HEK293 (cell line): ENCODE measurements at regions of chr6 and their contacts with region 1.

Region 1: DNA sequence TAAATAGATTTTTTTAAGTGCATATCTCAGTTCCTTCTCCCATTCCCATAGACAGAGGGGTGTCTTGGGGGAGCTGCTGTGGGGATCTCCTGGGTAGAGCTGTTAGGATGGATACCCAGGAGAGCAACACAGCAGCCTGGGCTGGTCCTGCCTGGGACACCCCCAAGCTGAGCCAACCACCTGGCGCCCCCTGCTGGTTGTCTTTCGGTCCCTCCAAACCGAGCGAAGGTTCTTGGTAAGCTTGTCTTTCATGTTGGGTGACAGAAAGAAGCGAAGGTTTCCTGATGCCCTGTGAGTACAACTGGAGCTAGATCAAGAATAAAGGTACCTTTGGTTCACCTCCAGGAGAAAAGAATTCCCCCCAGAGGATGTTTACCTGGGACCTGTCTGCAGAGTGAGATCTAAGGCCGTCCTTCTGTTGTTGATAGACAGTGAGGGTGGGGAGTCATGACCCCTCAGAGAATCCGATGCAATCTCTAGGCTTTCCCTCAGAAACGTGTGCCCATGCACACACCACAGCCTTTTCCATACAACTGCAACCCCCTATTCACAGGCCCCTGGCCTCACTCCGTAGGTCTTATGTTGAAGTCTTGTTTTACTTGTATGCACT is 50.8 kb downstream of the SNX9 start:
- H3K4me3 ChIP-seq: no peak overlapping the region
- H3K27ac ChIP-seq: no peak overlapping the region
- H3K4me1 ChIP-seq: no peaks in the 10 kb centered on the region
- CTCF ChIP-seq: peak; percentile 72

Region 2: GRCh38 chr6:157764178-157765033 is 109.4 kb before region 1 on chr6:
- CTCF ChIA-PET with region 1: interaction called, 143 read pairs
- POLR2A ChIA-PET with region 1: interaction called, 4 read pairs
- H3K4me3 ChIP-seq: no peak overlapping the region
- H3K27ac ChIP-seq: no peak overlapping the region
- H3K4me1 ChIP-seq: peaks cover 5% of the 10 kb centered on the region; the same call in 1 of the 2 replicates
- CTCF ChIP-seq: no peak

Region 3: DNA sequence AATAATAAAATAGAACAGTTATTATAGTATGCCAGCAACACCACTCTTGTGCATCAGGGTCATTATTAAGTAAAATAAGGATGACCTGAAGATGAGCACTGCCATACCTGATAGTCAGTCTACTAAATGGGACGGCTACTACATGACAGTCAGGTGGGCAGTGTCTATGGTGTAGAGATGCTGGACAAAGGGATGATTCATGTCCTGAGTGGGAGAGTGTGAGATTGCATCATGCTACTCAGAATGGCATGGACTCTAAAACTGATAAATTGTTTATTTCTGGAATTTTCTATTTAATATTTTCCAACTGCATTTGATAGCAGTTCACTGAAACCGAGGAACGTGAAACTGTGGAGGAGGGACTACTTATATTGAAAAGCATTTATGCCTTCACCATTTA is 12.0 kb before region 1 on chr6:
- CTCF ChIA-PET with region 1: interaction called, 49 read pairs
- POLR2A ChIA-PET with region 1: no interaction called
- H3K4me3 ChIP-seq: no peak overlapping the region
- H3K27ac ChIP-seq: no peak overlapping the region
- H3K4me1 ChIP-seq: peaks cover 30% of the 10 kb centered on the region
- CTCF ChIP-seq: no peak

Region 4: DNA sequence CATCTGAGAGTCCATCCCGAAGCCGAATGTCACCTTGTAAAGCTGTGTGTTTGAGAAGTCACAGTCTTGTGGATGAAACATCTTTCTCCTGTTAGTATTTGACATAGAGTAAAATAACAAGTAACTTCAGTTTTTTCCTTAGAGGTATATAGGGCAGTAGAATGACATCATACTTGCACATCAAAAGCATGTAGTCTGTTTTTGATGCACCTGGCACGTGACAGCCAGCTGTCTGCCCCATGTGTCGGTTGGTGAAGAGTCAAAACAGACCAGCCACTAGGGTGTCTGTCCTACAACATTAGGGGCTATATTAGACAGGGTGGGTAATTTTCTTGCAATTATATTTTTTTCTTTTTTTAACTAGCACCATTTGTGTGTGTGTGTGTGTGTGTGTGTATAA is 19.4 kb after region 1 on chr6:
- CTCF ChIA-PET with region 1: interaction called, 10 read pairs
- POLR2A ChIA-PET with region 1: no interaction called
- H3K4me3 ChIP-seq: no peak overlapping the region
- H3K27ac ChIP-seq: no peak overlapping the region
- H3K4me1 ChIP-seq: no peaks in the 10 kb centered on the region
- CTCF ChIP-seq: no peak